CD4-positive, alpha-beta T cell (primary cell): ENCODE measurements at regions of chr16 and their contacts with region 1.

Region 1: DNA sequence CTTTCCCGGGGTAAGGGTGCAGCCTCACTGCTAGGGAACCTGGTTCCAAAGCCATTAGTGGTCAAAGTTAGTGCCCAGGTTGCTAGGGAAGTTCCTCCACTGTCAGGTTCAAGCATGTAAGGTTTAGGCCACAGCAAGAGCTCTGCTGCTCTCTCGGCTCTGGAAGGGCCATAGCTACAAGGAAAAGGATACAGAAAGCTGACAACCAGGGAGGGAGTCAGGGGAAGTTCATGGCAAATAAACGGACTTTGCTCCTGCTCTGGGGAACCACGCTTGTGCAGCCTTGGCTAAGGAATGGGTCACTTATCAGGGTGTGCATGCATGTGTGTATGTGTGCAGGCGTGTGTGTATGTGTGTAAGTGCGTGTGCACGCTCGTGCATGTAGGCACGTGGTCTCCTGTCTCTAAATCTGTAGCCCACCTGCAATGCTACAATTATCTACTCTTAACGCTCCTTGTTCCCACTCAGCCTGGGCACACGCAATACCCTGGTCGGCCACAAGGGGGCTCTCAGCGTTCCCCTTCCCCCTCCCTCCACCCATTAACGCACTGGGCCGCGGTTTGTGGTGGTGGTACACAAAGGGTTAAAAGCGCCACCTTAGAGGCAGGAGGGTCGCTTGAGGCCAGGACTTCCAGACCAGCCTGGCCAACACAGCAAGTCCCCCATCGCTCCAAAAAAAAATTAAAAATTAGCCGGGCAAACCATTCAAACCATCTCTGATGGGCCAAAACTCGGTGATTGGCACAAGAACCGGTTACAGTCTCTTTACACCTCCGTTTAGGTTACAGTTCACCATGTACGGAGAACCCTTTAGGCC is 48.4 kb upstream of the KDM8 start:
- DNase-seq: peak; percentile 51 to 83 (median 67)
- ATAC-seq: peak; percentile 84
- H3K4me3 ChIP-seq: no peak overlapping the region
- H3K4me3 Mint-ChIP-seq: no peak overlapping the region
- H3K27ac ChIP-seq: no peak overlapping the region
- H3K27ac Mint-ChIP-seq: no peak overlapping the region
- H3K4me1 ChIP-seq: peaks cover 9% of the 10 kb centered on the region
- H3K4me1 Mint-ChIP-seq: peaks cover 14% of the 10 kb centered on the region
- H3K27me3 ChIP-seq: no peaks in the 10 kb centered on the region
- H3K27me3 Mint-ChIP-seq: no peaks in the 10 kb centered on the region
- CTCF ChIP-seq: peak; percentile 99

Region 2: DNA sequence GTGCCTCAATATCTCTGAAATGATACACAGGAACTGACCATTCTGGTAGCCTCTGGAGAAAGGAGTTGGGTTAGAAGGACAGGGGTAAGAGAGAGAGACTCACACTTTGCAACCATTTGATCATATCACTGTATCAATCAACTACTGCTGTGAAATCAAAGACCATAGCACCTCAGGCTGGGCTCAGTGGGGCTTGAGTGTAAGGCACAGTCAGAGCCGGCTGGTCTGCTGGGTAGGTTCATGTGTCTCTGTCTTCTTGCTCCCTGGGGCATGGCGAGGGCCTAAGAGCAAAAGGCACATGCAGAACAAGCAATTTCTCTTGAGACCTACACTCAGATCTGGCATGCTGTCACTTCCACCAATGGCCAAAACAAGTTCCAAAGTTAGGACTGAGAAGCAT is 134.9 kb before region 1 on chr16:
- CTCF ChIA-PET with region 1: no interaction called
- POLR2A ChIA-PET with region 1: no interaction called
- intact Hi-C with region 1: no loop called
- DNase-seq: no peak
- ATAC-seq: no peak
- H3K4me3 ChIP-seq: no peak overlapping the region
- H3K4me3 Mint-ChIP-seq: no peak overlapping the region
- H3K27ac ChIP-seq: no peak overlapping the region
- H3K27ac Mint-ChIP-seq: no peak overlapping the region
- H3K4me1 ChIP-seq: no peaks in the 10 kb centered on the region
- H3K4me1 Mint-ChIP-seq: no peaks in the 10 kb centered on the region
- H3K27me3 ChIP-seq: peaks cover 0 to 8% of the 10 kb centered on the region in 2 experiments
- H3K27me3 Mint-ChIP-seq: peaks cover 16% of the 10 kb centered on the region
- CTCF ChIP-seq: no peak

Region 3: DNA sequence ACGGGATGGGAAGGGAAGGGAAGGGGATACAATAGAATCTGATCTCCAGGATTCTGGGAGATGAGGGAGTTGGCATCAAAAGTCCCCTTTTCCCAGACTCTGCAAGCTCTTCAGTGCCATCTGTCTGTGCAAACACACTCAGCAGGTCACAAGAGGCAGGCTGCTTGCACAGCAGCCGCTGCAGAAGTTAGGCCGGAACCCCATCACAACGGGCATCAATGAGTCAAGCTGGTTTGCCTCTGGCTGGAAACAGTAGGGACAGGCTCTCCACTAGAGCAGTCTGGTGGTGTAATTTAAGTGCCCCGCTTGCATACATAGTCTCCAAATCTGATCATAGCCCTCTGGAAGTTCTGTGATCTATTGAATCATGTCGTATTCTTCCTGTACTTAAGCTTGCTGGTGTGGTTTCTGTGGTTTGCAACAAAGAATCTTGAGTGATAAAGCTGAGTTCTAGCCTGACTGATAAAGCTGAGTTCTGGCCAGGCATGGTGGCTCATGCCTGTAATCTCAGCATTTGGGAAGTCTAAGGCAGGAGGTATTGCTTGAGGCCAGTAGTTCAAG is 14.7 kb after region 1 on chr16:
- CTCF ChIA-PET with region 1: interaction called, 33 read pairs
- POLR2A ChIA-PET with region 1: interaction called, 9 read pairs
- intact Hi-C with region 1: loop called (anchors 2 kb)
- DNase-seq: peak; percentile 55 to 94 (median 75)
- ATAC-seq: peak; percentile 84
- H3K4me3 ChIP-seq: peak overlapping the region; percentile 5
- H3K4me3 Mint-ChIP-seq: peak overlapping the region; percentile 2
- H3K27ac ChIP-seq: peak overlapping the region in 1 of 2 donors; percentile 21
- H3K27ac Mint-ChIP-seq: peak overlapping the region; percentile 71
- H3K4me1 ChIP-seq: peaks cover 66% of the 10 kb centered on the region
- H3K4me1 Mint-ChIP-seq: peaks cover 75% of the 10 kb centered on the region
- H3K27me3 ChIP-seq: no peaks in the 10 kb centered on the region
- H3K27me3 Mint-ChIP-seq: no peaks in the 10 kb centered on the region
- CTCF ChIP-seq: no peak

Region 4: GRCh38 chr16:27193302-27193990 is 38.5 kb after region 1 on chr16:
- CTCF ChIA-PET with region 1: no interaction called
- POLR2A ChIA-PET with region 1: interaction called, 4 read pairs
- intact Hi-C with region 1: loop called in 1 of 2 experiments (anchors 5 kb)
- DNase-seq: no peak
- ATAC-seq: no peak
- H3K4me3 ChIP-seq: no peak overlapping the region
- H3K4me3 Mint-ChIP-seq: no peak overlapping the region
- H3K27ac ChIP-seq: no peak overlapping the region
- H3K27ac Mint-ChIP-seq: peak overlapping the region; percentile 95
- H3K4me1 ChIP-seq: peaks cover 50% of the 10 kb centered on the region
- H3K4me1 Mint-ChIP-seq: peaks cover 65% of the 10 kb centered on the region
- H3K27me3 ChIP-seq: no peaks in the 10 kb centered on the region
- H3K27me3 Mint-ChIP-seq: no peaks in the 10 kb centered on the region
- CTCF ChIP-seq: no peak

Region 5: DNA sequence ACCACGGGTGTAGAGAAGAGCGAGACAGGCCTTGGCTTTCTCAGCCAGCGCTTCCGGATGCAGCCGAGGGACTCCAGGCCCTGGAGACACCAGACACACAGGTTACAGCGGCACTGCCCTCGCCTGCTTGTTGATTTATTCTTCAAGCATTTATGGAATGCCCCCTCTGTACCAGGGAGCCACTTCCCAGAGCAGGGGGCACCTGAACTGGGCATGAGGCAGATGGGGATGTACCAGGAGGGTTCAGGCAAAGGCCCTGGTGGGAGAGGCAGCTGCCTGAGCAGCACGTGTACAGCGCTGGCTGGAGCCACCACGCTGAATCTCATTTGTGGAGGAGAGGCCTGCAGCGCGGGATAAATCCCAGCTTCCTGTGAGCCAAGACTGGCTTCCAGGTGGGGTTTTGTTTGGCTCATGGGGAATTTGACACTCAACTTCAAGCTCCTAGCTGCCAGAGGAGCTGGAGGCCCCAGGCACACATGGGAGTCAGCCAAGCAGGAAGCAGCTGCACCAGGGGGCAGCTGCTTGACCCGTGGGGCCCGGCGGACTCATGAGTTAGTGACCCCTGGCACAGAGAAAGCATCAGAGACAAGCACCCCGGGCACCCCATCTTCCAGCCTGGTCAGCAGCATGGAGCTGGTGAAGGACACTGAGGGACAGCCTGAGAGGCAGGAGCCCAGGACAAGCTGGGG is 306.7 kb after region 1 on chr16:
- CTCF ChIA-PET with region 1: no interaction called
- POLR2A ChIA-PET with region 1: no interaction called
- intact Hi-C with region 1: loop called (anchors 1 kb)
- DNase-seq: no peak
- ATAC-seq: no peak
- H3K4me3 ChIP-seq: no peak overlapping the region
- H3K4me3 Mint-ChIP-seq: no peak overlapping the region
- H3K27ac ChIP-seq: no peak overlapping the region
- H3K27ac Mint-ChIP-seq: no peak overlapping the region
- H3K4me1 ChIP-seq: peaks cover 68% of the 10 kb centered on the region
- H3K4me1 Mint-ChIP-seq: peaks cover 48% of the 10 kb centered on the region
- H3K27me3 ChIP-seq: no peaks in the 10 kb centered on the region
- H3K27me3 Mint-ChIP-seq: no peaks in the 10 kb centered on the region
- CTCF ChIP-seq: no peak